PC-3 (cell line): ENCODE measurements at regions of chr2 and their contacts with region 1.

Region 1: DNA sequence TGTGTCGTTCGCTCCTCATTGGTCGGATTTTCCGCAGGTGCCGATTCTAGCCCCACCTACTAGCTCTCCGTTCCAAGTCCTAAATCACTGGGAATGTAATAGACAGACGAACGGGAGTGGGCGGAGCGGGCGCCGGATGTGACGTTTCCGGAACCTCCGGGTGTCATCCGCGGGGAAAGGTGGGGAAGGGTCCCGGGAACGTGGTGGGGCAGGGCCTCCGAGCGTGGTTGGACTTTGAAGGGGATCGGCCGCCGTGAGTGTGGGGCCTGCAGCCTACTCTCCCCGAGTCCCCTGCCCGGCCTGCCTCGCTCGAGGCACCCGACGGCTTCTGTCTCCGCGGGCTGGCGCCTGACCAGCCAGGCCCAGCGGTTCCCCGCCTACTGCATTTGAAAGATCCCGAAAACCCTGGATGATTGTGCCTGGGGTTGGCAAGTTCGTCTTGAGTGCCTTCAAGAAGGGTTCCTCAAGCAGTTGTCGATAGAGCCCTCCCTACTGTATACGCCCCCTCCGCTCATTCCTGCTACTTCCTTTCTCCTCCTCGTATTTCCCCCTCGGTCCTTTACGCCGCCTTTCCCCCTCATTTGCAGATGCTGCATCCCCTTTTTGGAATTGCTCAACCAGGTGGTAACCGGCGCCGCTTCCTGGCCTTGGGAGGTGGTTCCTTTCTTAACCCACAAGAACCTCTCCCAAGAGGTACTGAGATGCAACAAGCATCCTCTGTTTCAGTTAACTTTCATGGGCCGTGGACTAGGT is at the start of gene STAMBP:
- DNase-seq: peak; percentile 97
- ATAC-seq: peak; percentile 76
- H3K4me3 ChIP-seq: peak within 1 kb of the TSS; percentile 82
- H3K27ac ChIP-seq: peak within 1 kb of the TSS; percentile 76
- H3K4me1 ChIP-seq: peaks cover 48% of the 10 kb centered on the region
- H3K27me3 ChIP-seq: no peaks in the 10 kb centered on the region
- CTCF ChIP-seq: no peak
- total RNA-seq, gene STAMBP: 23.8 and 32.2 TPM in 2 replicates

Region 2: GRCh38 chr2:73588177-73588576 is 240.8 kb before region 1 on chr2:
- CTCF ChIA-PET with region 1: no interaction called
- POLR2A ChIA-PET with region 1: no interaction called
- intact Hi-C with region 1: no loop called
- DNase-seq: no peak
- ATAC-seq: no peak
- H3K4me3 ChIP-seq: no peak overlapping the region
- H3K27ac ChIP-seq: no peak overlapping the region
- H3K4me1 ChIP-seq: no peaks in the 10 kb centered on the region
- H3K27me3 ChIP-seq: no peaks in the 10 kb centered on the region
- CTCF ChIP-seq: no peak

Region 3: DNA sequence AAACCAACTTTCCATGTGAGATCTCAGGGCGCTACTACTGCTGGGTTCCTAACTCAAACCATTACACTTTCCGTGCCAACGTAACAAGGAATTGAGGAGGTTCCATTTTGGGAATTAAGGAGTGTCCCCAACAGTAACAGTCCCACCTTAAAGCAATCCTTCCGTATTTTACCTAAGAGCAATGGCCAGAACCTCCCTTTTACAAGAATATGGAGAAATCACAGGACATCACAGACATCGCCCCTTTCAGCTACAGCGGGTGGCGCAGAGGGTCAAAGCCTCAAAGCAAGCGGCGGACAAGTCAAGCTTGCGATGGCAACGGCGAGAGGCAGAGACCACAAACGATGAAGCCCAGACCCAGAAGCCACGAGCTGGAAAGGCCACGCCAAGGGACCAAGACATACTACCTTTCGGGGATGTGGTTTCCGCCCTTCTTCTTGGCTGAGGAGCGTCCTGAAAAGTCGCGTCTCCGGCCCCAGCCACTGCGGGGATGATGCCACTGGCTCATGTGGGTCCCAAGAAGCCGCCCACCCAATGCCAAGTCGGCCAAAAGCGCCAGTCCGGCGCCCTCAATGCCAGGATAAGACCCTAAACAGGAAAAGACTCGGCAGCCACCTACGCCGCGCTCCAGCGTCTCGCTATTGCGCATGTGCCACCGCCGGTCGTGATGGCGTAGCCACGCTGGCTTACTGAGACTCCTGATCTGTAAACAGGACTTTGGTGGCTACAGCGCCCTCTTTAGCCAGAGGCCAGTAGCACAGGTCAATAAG is 49.3 kb before region 1 on chr2 and contains the start of gene DUSP11:
- CTCF ChIA-PET with region 1: no interaction called
- POLR2A ChIA-PET with region 1: no interaction called
- intact Hi-C with region 1: no loop called
- DNase-seq: peak; percentile 98
- ATAC-seq: peak; percentile 98
- H3K4me3 ChIP-seq: peak within 1 kb of the TSS; percentile 85
- H3K27ac ChIP-seq: peak within 1 kb of the TSS; percentile 6; the same call in 1 of the 2 replicates
- H3K4me1 ChIP-seq: peaks cover 18% of the 10 kb centered on the region
- H3K27me3 ChIP-seq: no peaks in the 10 kb centered on the region
- CTCF ChIP-seq: peak; percentile 92
- total RNA-seq, gene DUSP11: 17.5 and 30.4 TPM in 2 replicates

Region 4: GRCh38 chr2:73896362-73897239 is 67.6 kb after region 1 on chr2:
- CTCF ChIA-PET with region 1: no interaction called
- POLR2A ChIA-PET with region 1: interaction called, 42 read pairs
- intact Hi-C with region 1: no loop called
- DNase-seq: no peak
- ATAC-seq: no peak
- H3K4me3 ChIP-seq: no peak overlapping the region
- H3K27ac ChIP-seq: no peak overlapping the region
- H3K4me1 ChIP-seq: no peaks in the 10 kb centered on the region
- H3K27me3 ChIP-seq: no peaks in the 10 kb centered on the region
- CTCF ChIP-seq: no peak

Region 5: GRCh38 chr2:73926493-73927338 is 97.7 kb after region 1 on chr2 and contains the start of gene DGUOK:
- CTCF ChIA-PET with region 1: interaction called, 6 read pairs
- POLR2A ChIA-PET with region 1: no interaction called
- intact Hi-C with region 1: loop called (anchors 2 kb)
- DNase-seq: peak; percentile 99
- ATAC-seq: peak; percentile 99
- H3K4me3 ChIP-seq: peak within 1 kb of the TSS; percentile 75
- H3K27ac ChIP-seq: peak within 1 kb of the TSS; percentile 78
- H3K4me1 ChIP-seq: peaks cover 40% of the 10 kb centered on the region
- H3K27me3 ChIP-seq: no peaks in the 10 kb centered on the region
- CTCF ChIP-seq: no peak
- total RNA-seq, gene DGUOK: 42.2 and 61.3 TPM in 2 replicates

Region 6: DNA sequence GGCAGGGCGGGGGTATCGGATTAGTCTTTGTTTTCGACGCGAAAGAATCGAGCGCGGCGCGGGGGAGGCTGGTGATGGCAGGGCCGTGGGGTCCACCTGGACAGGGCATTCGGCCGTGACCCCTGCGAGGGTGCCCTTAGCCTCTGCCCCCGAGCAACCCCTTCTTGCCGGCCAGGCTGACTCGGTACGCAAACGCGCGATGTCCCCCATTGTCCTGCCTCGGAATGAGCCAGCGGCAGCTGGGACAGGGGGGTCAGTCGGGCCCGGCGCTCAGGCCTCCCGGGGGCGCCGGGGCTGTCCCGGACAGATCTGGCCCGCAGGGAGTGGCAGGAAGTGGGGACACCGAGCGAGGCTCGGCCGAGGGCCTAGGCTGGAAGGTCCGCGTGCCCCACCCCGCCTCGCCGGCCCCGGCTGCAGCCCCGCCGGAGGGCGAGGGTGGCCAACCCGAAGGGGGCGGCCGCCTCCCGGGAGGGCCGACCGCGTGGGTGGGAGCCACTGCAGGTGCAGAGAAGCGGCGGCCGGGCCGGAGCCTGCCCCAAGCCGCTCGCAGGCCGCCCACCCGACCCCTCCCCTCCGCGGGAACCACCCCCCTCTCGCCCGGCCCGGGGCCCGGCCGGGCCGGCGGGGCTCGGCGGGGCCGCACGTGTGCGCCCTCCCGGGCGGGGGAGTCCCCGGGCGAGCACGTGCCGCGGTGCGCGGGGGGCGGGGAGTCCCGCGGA is 155.4 kb after region 1 on chr2 and contains the start of gene TET3:
- CTCF ChIA-PET with region 1: interaction called, 10 read pairs
- POLR2A ChIA-PET with region 1: interaction called, 9 read pairs
- intact Hi-C with region 1: loop called (anchors 1 kb)
- DNase-seq: peak; percentile 37
- ATAC-seq: peak; percentile 2; the same call in 1 of the 2 replicates
- H3K4me3 ChIP-seq: peak within 1 kb of the TSS; percentile 81
- H3K27ac ChIP-seq: peak within 1 kb of the TSS; percentile 98
- H3K4me1 ChIP-seq: peaks cover 78% of the 10 kb centered on the region
- H3K27me3 ChIP-seq: no peaks in the 10 kb centered on the region
- CTCF ChIP-seq: no peak
- total RNA-seq, gene TET3: 6.1 and 10.1 TPM in 2 replicates

Region 7: GRCh38 chr2:74104839-74105238 is 275.8 kb after region 1 on chr2:
- CTCF ChIA-PET with region 1: interaction called, 10 read pairs
- POLR2A ChIA-PET with region 1: interaction called, 5 read pairs
- intact Hi-C with region 1: loop called (anchors 1 kb)
- DNase-seq: no peak
- ATAC-seq: no peak
- H3K4me3 ChIP-seq: no peak overlapping the region
- H3K27ac ChIP-seq: no peak overlapping the region
- H3K4me1 ChIP-seq: no peaks in the 10 kb centered on the region
- H3K27me3 ChIP-seq: no peaks in the 10 kb centered on the region
- CTCF ChIP-seq: 0 out of 2 replicates have a peak, but pooled peaks have one; percentile 28

Region 8: GRCh38 chr2:74147727-74148456 is 318.9 kb after region 1 on chr2 and contains the start of gene BOLA3:
- CTCF ChIA-PET with region 1: interaction called, 6 read pairs
- POLR2A ChIA-PET with region 1: interaction called, 6 read pairs
- intact Hi-C with region 1: loop called (anchors 1 kb)
- DNase-seq: peak; percentile 79
- ATAC-seq: peak; percentile 92
- H3K4me3 ChIP-seq: peak within 1 kb of the TSS; percentile 99
- H3K27ac ChIP-seq: peak within 1 kb of the TSS; percentile 13; the same call in 1 of the 2 replicates
- H3K4me1 ChIP-seq: peaks cover 13% of the 10 kb centered on the region
- H3K27me3 ChIP-seq: no peaks in the 10 kb centered on the region
- CTCF ChIP-seq: peak; percentile 75
- total RNA-seq, gene BOLA3: 60.9 and 104 TPM in 2 replicates